Endothelial cell of umbilical vein (primary cell): ENCODE measurements at regions of chr3 and their contacts with region 1.

Region 1: DNA sequence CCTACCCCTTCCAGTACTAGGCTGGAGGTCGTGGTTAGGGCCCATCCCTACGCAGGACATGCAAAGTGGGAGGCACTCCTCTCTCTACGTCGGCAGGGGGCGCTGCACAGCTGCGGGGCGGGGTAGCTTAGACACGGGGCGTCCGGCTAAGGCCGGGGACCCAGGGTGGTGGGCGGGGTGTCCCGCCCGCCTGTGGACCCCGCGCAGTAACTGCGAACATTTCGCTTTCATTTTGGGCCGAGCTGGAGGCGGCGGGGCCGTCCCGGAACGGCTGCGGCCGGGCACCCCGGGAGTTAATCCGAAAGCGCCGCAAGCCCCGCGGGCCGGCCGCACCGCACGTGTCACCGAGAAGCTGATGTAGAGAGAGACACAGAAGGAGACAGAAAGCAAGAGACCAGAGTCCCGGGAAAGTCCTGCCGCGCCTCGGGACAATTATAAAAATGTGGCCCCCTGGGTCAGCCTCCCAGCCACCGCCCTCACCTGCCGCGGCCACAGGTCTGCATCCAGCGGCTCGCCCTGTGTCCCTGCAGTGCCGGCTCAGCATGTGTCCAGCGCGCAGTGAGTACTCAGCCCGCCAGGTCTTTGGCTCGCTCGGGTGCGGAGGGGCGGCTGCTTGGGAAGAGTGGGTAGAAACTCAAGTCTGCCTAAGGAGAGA is at the start of gene IL12A:
- DNase-seq: peak; percentile 75
- H3K4me3 ChIP-seq: peak within 1 kb of the TSS; percentile 58 to 71 (median 60)
- H3K27ac ChIP-seq: no peak within 1 kb of the TSS
- H3K4me1 ChIP-seq: peaks cover 4% of the 10 kb centered on the region
- H3K27me3 ChIP-seq: no peaks in the 10 kb centered on the region
- CTCF ChIP-seq: peak; percentile 96 to 98
- POLR2A ChIP-seq: no peak
- total RNA-seq, gene IL12A: 1.5 and 1.7 TPM in 2 replicates

Region 2: GRCh38 chr3:159852821-159853505 is 135.8 kb before region 1 on chr3:
- CTCF ChIA-PET with region 1: interaction called, 13 read pairs
- POLR2A ChIA-PET with region 1: no interaction called
- dilution Hi-C with region 1: no loop called
- intact Hi-C with region 1: no loop called
- DNase-seq: peak; percentile 97
- H3K4me3 ChIP-seq: peak overlapping the region in 2 of 3 experiments; percentile 45 to 52
- H3K27ac ChIP-seq: peak overlapping the region; percentile 97
- H3K4me1 ChIP-seq: peaks cover 70% of the 10 kb centered on the region
- H3K27me3 ChIP-seq: no peaks in the 10 kb centered on the region
- CTCF ChIP-seq: no peak
- POLR2A ChIP-seq: peak; percentile 2

Region 3: GRCh38 chr3:159929435-159930141 is 59.2 kb before region 1 on chr3:
- CTCF ChIA-PET with region 1: interaction called, 33 read pairs
- POLR2A ChIA-PET with region 1: no interaction called
- dilution Hi-C with region 1: no loop called
- intact Hi-C with region 1: loop called (anchors 2 kb)
- DNase-seq: peak; percentile 70
- H3K4me3 ChIP-seq: no peak overlapping the region
- H3K27ac ChIP-seq: peak overlapping the region; percentile 41
- H3K4me1 ChIP-seq: peaks cover 14% of the 10 kb centered on the region
- H3K27me3 ChIP-seq: no peaks in the 10 kb centered on the region
- CTCF ChIP-seq: peak; percentile 11 to 33
- POLR2A ChIP-seq: no peak

Region 4: GRCh38 chr3:159971311-159971710 is 17.4 kb before region 1 on chr3:
- CTCF ChIA-PET with region 1: interaction called, 35 read pairs
- POLR2A ChIA-PET with region 1: no interaction called
- dilution Hi-C with region 1: no loop called
- intact Hi-C with region 1: no loop called
- DNase-seq: no peak
- H3K4me3 ChIP-seq: no peak overlapping the region
- H3K27ac ChIP-seq: no peak overlapping the region
- H3K4me1 ChIP-seq: no peaks in the 10 kb centered on the region
- H3K27me3 ChIP-seq: no peaks in the 10 kb centered on the region
- CTCF ChIP-seq: no peak
- POLR2A ChIP-seq: no peak

Region 5: GRCh38 chr3:160003520-160004128 is 14.9 kb after region 1 on chr3:
- CTCF ChIA-PET with region 1: interaction called, 182 read pairs
- POLR2A ChIA-PET with region 1: no interaction called
- dilution Hi-C with region 1: no loop called
- intact Hi-C with region 1: no loop called
- DNase-seq: peak; percentile 68
- H3K4me3 ChIP-seq: no peak overlapping the region
- H3K27ac ChIP-seq: no peak overlapping the region
- H3K4me1 ChIP-seq: no peaks in the 10 kb centered on the region
- H3K27me3 ChIP-seq: no peaks in the 10 kb centered on the region
- CTCF ChIP-seq: peak; percentile 67
- POLR2A ChIP-seq: no peak